ENCODE measurements at regions of chr17 and their contacts with region 1.

Region 1: GRCh38 chr17:63741221-63742049 is at the start of gene STRADA:
- DNase-seq: peak; percentile 100
- H3K4me3 Mint-ChIP-seq: peak within 1 kb of the TSS; percentile 92
- H3K27ac Mint-ChIP-seq: peak within 1 kb of the TSS; percentile 96
- H3K4me1 Mint-ChIP-seq: peaks cover 26% of the 10 kb centered on the region
- H3K27me3 Mint-ChIP-seq: no peaks in the 10 kb centered on the region
- total RNA-seq, gene STRADA: 50.4 and 54.6 TPM in 2 replicates

Region 2: GRCh38 chr17:63621766-63622519 is 119.5 kb before region 1 on chr17 and contains the start of gene MAP3K3:
- intact Hi-C with region 1: loop called (anchors 1 kb)
- DNase-seq: peak; percentile 99
- H3K4me3 Mint-ChIP-seq: peak within 1 kb of the TSS; percentile 99
- H3K27ac Mint-ChIP-seq: peak within 1 kb of the TSS; percentile 96
- H3K4me1 Mint-ChIP-seq: peaks cover 30% of the 10 kb centered on the region
- H3K27me3 Mint-ChIP-seq: peaks cover 11% of the 10 kb centered on the region
- total RNA-seq, gene MAP3K3: 26.2 and 26.7 TPM in 2 replicates

Region 3: GRCh38 chr17:63842540-63843386 is 101.3 kb after region 1 on chr17 and contains the start of gene SMARCD2:
- intact Hi-C with region 1: loop called (anchors 1 kb)
- DNase-seq: peak; percentile 99
- H3K4me3 Mint-ChIP-seq: peak within 1 kb of the TSS; percentile 98
- H3K27ac Mint-ChIP-seq: peak within 1 kb of the TSS; percentile 93
- H3K4me1 Mint-ChIP-seq: peaks cover 27% of the 10 kb centered on the region
- H3K27me3 Mint-ChIP-seq: no peaks in the 10 kb centered on the region
- total RNA-seq, gene SMARCD2: 120 and 121 TPM in 2 replicates